ENCODE measurements at regions of chr13 and their contacts with region 1.

Region 1: DNA sequence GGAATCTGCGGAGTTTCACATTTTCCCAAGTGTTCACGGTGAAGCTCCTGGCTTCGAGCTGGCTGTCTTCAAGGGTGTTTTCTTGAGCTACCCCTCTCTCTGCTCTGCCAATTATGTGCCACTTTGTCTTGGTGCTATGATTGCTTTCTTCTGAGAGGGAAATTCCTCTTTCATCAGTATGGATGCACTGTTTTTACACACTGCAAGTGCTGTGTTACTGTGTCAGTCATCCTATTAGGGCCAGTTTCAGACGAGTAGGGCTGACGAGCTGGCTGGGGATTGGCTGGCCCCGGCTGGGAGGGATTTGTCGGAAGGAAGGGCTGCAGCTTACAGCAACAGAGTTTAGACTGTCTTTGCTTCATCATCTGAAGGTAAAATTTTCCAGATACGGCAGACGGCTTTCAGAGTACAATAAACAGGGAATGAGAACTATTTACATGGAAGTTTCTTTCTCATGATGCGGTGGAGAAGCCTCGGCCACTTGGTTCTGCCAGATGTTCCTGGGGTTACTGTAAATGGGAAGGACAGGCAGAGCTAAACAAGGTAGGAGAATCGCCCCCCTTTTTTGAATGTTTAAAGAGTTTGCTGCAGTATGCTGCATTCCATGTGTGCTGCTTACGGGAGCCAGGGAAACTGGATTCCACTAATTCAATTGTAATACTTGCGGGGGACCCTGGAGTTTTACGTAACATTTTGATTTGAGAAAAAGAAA is at the start of gene MBNL2:
- DNase-seq: peak; percentile 93
- H3K4me3 ChIP-seq: peak within 1 kb of the TSS; percentile 62
- H3K27ac ChIP-seq: peak within 1 kb of the TSS; percentile 72
- H3K4me1 ChIP-seq: peaks cover 30% of the 10 kb centered on the region
- H3K27me3 ChIP-seq: no peaks in the 10 kb centered on the region
- CTCF ChIP-seq: no peak
- total RNA-seq, gene MBNL2: 12.0 TPM in 2 replicates

Region 2: GRCh38 chr13:97124916-97125809 is 97.0 kb before region 1 on chr13:
- CTCF ChIA-PET with region 1: no interaction called
- POLR2A ChIA-PET with region 1: no interaction called
- intact Hi-C with region 1: loop called (anchors 5 kb)
- DNase-seq: peak; percentile 93
- H3K4me3 ChIP-seq: no peak overlapping the region
- H3K27ac ChIP-seq: peak overlapping the region; percentile 47
- H3K4me1 ChIP-seq: peaks cover 25% of the 10 kb centered on the region
- H3K27me3 ChIP-seq: no peaks in the 10 kb centered on the region
- CTCF ChIP-seq: peak; percentile 33; the same call in 1 of the 2 replicates

Region 3: GRCh38 chr13:97249093-97249795 is 27.1 kb after region 1 on chr13:
- CTCF ChIA-PET with region 1: no interaction called
- POLR2A ChIA-PET with region 1: no interaction called
- intact Hi-C with region 1: no loop called
- DNase-seq: no peak
- H3K4me3 ChIP-seq: no peak overlapping the region
- H3K27ac ChIP-seq: no peak overlapping the region
- H3K4me1 ChIP-seq: peaks cover 23% of the 10 kb centered on the region
- H3K27me3 ChIP-seq: no peaks in the 10 kb centered on the region
- CTCF ChIP-seq: no peak

Region 4: DNA sequence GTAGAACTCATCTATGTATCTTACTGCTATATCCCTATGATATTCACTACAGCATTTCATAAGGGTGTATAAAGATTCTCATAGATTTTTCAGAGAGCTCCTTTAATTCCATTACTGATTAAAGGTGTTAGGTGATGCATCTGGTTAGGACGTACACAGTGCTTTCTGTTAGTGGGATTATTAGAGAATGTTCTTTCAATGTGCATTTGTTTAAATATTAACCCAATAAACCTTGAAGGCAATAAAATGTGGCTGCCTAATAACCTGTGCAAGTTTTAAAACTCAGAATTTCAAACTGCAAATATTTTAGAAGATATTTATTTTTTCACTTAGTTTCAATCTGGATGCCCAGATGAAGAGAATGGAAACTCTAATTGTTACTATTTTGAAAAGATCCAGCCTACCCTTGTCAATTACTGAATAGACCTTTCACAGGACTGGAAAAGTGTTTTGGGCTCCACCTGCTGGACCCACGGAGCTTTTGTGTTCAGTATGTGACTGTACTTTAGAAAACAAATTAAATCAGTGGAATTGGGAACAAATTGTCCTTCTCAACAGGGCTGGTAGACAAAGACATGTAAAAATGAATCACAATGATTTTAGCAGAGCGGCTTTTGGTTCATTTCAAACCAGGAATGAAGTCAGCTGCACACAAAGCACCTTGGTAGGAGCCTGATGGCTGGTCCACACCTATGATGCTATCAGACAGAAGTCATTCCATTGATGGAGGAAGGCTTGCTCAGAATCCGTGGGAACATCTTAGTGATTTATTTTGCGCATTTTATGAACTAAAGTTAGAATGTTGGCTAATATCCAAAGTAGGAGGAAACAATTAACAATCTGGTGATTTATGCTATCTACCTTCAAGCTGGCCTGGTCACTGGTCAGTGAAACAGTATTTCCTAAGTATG is 122.4 kb after region 1 on chr13:
- CTCF ChIA-PET with region 1: no interaction called
- POLR2A ChIA-PET with region 1: no interaction called
- intact Hi-C with region 1: loop called (anchors 5 kb)
- DNase-seq: peak; percentile 73
- H3K4me3 ChIP-seq: no peak overlapping the region
- H3K27ac ChIP-seq: no peak overlapping the region
- H3K4me1 ChIP-seq: no peaks in the 10 kb centered on the region
- H3K27me3 ChIP-seq: no peaks in the 10 kb centered on the region
- CTCF ChIP-seq: peak; percentile 71

Region 5: DNA sequence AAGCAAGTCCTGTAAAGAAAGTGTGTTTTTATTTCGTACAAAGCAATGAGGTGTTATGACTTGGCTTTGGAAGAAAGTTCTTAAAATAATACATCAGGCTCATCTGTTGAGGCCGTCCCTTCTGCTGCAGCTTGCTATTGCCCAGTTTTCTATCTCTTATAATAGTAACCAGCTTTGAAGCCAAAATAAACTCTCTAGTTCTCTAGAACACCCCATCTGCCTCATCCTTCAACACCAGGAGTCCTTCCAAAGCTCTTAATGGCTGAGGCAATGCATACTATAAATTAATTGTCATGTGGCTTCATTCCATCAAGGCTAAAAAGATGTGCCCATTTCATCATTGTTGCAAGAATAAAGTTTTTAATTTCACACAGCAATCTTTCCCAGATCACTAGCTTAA is 681.9 kb after region 1 on chr13:
- CTCF ChIA-PET with region 1: no interaction called
- POLR2A ChIA-PET with region 1: no interaction called
- intact Hi-C with region 1: no loop called
- DNase-seq: no peak
- H3K4me3 ChIP-seq: no peak overlapping the region
- H3K27ac ChIP-seq: no peak overlapping the region
- H3K4me1 ChIP-seq: no peaks in the 10 kb centered on the region
- H3K27me3 ChIP-seq: no peaks in the 10 kb centered on the region
- CTCF ChIP-seq: no peak

Measured in A673 (cell line).